GM13976 (cell line): ENCODE measurements at regions of chr17 and their contacts with region 1.

Region 1: DNA sequence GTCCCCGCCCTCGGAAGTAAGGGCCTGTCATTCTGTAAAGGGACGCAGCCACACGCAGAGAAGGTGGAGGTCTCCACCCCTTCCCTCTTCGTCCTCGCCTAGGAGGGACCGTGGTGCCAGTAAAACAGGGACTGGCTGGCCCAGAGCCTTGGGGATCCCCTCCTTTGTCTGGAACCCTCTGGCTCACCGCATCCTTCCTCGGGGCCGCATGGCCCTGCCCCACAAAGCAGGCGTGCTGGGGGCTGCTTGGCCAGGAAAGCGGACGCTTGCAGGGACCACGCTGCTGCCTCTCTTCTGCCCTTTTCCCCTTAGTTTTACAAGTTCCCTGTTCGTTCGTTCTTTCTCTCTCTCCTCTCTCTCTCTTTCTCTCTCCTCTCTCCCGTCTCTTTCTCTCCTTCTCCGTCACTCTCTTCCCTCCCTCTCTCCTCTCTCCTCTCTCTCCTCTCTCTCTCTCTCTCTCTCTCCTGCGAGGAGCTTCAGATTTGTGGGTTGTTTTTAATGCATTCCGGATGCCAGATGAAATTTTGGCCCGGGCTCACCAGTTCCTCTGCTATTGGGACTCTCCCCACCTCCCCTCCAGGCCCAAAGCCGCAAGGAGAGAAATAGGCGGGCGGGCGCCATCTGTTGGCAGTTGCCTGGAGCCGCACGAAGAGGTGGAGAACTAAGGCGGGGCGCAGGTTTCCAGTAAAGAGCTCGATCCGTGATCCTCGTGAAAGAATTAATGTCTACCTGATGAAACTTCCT is 35.1 kb upstream of the CDRT4 start:
- DNase-seq: peak; percentile 86
- CTCF ChIP-seq: peak; percentile 84

Region 2: DNA sequence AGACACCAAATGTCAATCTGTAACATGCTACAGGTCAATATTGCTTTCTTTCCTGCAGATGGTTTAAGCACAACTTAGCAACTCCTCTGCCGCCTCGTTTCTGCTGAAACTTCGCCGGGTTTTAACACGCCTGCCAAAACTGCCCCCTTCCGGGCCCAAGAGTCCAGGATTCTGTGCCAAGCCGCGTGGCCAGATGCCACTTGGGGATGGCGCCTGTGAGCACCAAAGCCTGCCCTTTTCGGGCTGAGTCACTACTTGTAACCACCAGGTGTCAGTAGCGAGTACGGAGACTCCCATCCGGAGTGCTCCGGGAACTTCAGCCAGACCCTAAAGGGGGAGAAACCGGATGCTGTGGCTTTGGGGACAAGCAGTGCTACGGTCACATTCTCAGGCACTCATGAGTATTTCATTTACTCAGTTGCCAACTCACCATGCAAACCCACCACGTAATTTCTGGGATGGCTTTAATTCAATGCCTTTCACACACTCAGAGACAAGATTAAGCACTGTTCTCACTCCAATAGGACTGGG is 245.2 kb before region 1 on chr17:
- in situ Hi-C with region 1: loop called (anchors 10 kb)
- DNase-seq: peak; percentile 76
- CTCF ChIP-seq: peak; percentile 87

Region 3: GRCh38 chr17:15377200-15377599 is 125.3 kb before region 1 on chr17:
- in situ Hi-C with region 1: no loop called
- DNase-seq: no peak
- CTCF ChIP-seq: no peak